AG04449 (cell line): ENCODE measurements at regions of chr14 and their contacts with region 1.

Region 1: GRCh38 chr14:24271134-24271833 is at the start of gene RABGGTA:
- DNase-seq: no peak
- H3K4me3 ChIP-seq: peak within 1 kb of the TSS; percentile 98
- CTCF ChIP-seq: peak; percentile 97

Region 2: DNA sequence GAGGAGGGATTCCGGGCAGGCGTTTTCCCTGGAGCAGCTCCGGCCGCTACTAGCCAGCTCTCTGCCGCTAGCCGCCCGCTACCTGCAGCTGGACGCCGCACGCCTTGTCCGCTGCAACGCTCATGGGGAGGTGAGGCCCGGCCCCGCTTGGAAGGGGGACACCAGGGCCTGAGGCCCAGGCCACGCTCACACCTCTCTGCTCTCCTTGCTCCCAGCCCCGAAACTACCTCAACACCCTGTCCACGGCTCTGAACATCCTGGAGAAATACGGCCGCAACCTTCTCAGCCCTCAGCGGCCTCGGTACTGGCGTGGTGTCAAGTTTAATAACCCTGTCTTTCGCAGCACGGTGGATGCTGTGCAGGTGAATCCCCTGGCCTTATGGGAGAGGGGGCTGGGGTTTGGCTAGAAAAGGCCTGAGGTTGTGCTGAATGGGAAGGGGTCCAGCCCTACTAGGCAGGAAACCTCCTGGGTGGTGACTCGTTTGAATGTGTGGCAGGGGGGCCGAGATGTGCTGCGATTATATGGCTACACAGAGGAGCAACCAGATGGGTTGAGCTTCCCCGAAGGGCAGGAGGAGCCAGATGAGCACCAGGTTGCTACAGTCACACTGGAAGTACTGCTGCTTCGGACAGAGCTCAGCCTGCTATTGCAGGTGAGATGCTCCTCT is 123.4 kb before region 1 on chr14:
- CTCF ChIA-PET with region 1: no interaction called
- POLR2A ChIA-PET with region 1: no interaction called
- DNase-seq: no peak
- H3K4me3 ChIP-seq: peak overlapping the region; percentile 92
- CTCF ChIP-seq: no peak

Region 3: GRCh38 chr14:24251880-24252288 is 19.4 kb before region 1 on chr14:
- CTCF ChIA-PET with region 1: interaction called, 155 read pairs
- POLR2A ChIA-PET with region 1: interaction called, 4 read pairs
- DNase-seq: no peak
- H3K4me3 ChIP-seq: no peak overlapping the region
- CTCF ChIP-seq: no peak

Region 4: GRCh38 chr14:24259252-24259995 is 11.9 kb before region 1 on chr14:
- CTCF ChIA-PET with region 1: interaction called, 57 read pairs
- POLR2A ChIA-PET with region 1: no interaction called
- DNase-seq: no peak
- H3K4me3 ChIP-seq: no peak overlapping the region
- CTCF ChIP-seq: no peak